Left colon (tissue), 2 donors: ENCODE measurements at regions of chr9 and their contacts with region 1.

Region 1: GRCh38 chr9:38088006-38088925 is 19.2 kb upstream of the SHB start:
- DNase-seq: peak; percentile 55 to 73
- ATAC-seq: peak; percentile 75

Region 2: GRCh38 chr9:37806271-37806670 is 282.0 kb before region 1 on chr9:
- intact Hi-C with region 1: no loop called
- DNase-seq: no peak
- ATAC-seq: no peak

Region 3: DNA sequence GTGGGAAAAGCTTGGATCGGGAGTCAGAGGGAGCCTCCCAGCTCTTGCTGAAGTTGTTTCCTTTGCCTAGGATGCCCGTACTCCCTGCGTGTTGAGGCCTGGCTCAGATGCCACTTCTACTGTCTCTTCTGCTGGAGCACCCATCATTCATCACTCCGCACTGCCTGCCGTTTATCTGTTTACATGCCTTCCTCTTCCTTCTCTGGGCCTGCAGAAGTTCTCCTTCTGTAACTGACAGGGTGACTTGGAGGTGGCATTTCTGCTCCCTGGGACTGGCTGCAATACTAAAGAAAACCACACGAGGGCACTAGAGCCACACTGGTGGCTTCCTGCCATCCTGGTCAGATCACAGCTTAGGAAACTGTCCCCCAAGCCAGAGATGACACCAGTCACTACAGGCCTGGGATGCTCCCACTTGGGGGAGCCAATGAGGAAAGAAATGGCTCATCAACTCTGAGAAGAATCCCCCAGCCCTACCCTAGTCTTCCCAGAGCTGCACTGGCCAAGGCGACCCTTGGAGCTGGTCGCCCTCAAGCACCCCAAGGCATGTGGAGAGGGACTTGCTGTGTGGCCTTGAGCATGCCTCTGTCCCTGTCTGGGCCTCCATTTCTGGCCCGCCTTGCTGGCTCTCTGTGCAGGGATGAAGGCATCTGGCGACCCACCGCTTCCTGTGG is 174.6 kb before region 1 on chr9:
- intact Hi-C with region 1: loop called in 1 of 2 experiments (anchors 10 kb)
- DNase-seq: peak; percentile 51 to 86
- ATAC-seq: peak; percentile 85

Region 4: GRCh38 chr9:37925786-37926736 is 162.2 kb before region 1 on chr9:
- intact Hi-C with region 1: no loop called
- DNase-seq: no peak
- ATAC-seq: no peak

Region 5: GRCh38 chr9:38214432-38214831 is 126.2 kb after region 1 on chr9:
- intact Hi-C with region 1: no loop called
- DNase-seq: no peak
- ATAC-seq: no peak

Region 6: DNA sequence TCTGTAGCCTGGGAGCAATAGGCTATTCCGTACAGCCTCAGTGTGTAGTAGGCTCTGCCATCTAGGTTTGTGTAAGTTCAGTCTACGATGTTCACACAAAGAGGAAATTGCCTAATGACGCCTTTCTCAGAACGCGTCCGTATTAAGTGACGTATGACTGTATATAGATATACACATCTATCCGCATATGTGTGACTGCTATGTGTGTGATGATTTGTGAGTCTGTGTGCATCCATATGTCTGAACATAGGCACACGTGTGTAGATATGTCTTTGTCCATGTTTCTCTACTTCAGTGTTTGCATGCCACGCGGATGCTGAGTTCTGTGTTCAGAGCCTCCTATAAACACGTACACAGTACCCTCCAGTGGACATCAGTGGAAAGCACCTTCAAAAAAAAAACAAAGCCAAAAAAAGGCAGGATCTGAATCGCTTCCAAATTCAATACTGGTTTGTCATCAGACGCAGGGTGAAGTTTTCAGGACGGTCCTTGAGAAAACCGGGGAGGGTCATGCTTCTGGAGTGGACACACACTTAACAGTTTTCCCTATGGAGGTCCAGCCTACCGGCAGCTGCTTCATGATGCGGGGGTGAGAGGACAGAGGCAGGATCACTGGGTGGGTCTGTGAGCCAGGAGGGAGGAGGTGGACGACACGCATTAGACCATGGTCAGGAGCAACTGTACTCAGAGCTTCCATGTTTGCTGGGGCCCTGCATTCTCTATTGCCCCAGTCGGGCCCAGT is 274.8 kb after region 1 on chr9:
- intact Hi-C with region 1: loop called in 1 of 2 experiments (anchors 10 kb)
- DNase-seq: peak in 1 of 2 donors; percentile 34
- ATAC-seq: peak; percentile 81